Posterior cingulate gyrus (tissue), 11 donors: ENCODE measurements at regions of chr1 and their contacts with region 1.

Region 1: GRCh38 chr1:159854693-159855192 is 7.7 kb downstream of the VSIG8 start:
- DNase-seq: peak; percentile 48 to 97 (median 80)

Region 2: GRCh38 chr1:159752135-159752580 is 102.6 kb before region 1 on chr1:
- intact Hi-C with region 1: no loop called
- DNase-seq: no peak

Region 3: GRCh38 chr1:159780583-159781582 is 73.9 kb before region 1 on chr1 and contains the start of gene DUSP23:
- intact Hi-C with region 1: loop called (anchors 1 kb)
- DNase-seq: peak; percentile 94 to 99 (median 96)

Region 4: GRCh38 chr1:159798893-159799292 is 55.9 kb before region 1 on chr1:
- intact Hi-C with region 1: loop called (anchors 5 kb)
- DNase-seq: peak in 5 of 10 donors; percentile 36 to 84 (median 48)